ENCODE measurements at regions of chr19 and their contacts with region 1.

Region 1: GRCh38 chr19:53103198-53103944 is at the start of gene ZNF160:
- DNase-seq: peak; percentile 97 to 98 (median 97)
- H3K4me3 ChIP-seq: peak within 1 kb of the TSS; percentile 92 to 96
- H3K4me3 Mint-ChIP-seq: peak within 1 kb of the TSS; percentile 87 to 96 (median 95)
- H3K27ac ChIP-seq: peak within 1 kb of the TSS; percentile 84
- H3K27ac Mint-ChIP-seq: peak within 1 kb of the TSS; percentile 91 to 98 (median 95)
- H3K4me1 ChIP-seq: peaks cover 27% of the 10 kb centered on the region
- H3K4me1 Mint-ChIP-seq: peaks cover 20 to 46% (median 32%) of the 10 kb centered on the region in 4 donors
- H3K27me3 ChIP-seq: no peaks in the 10 kb centered on the region
- H3K27me3 Mint-ChIP-seq: no peaks in the 10 kb centered on the region
- total RNA-seq, gene ZNF160: 72.0 to 81.1 TPM

Region 2: GRCh38 chr19:52189735-52190486 is 913.5 kb before region 1 on chr19 and contains the start of gene PPP2R1A:
- CTCF ChIA-PET with region 1: no interaction called
- POLR2A ChIA-PET with region 1: no interaction called
- intact Hi-C with region 1: loop called (anchors 1 kb)
- DNase-seq: peak; percentile 97 to 100 (median 99)
- H3K4me3 ChIP-seq: peak within 1 kb of the TSS; percentile 75 to 87
- H3K4me3 Mint-ChIP-seq: peak within 1 kb of the TSS; percentile 94 to 99 (median 98)
- H3K27ac ChIP-seq: peak within 1 kb of the TSS; percentile 93
- H3K27ac Mint-ChIP-seq: peak within 1 kb of the TSS; percentile 92 to 100 (median 99)
- H3K4me1 ChIP-seq: peaks cover 53% of the 10 kb centered on the region
- H3K4me1 Mint-ChIP-seq: peaks cover 34 to 58% (median 43%) of the 10 kb centered on the region in 4 donors
- H3K27me3 ChIP-seq: no peaks in the 10 kb centered on the region
- H3K27me3 Mint-ChIP-seq: no peaks in the 10 kb centered on the region
- total RNA-seq, gene PPP2R1A: 166 to 175 TPM

Region 3: GRCh38 chr19:52853880-52854279 is 249.5 kb before region 1 on chr19:
- CTCF ChIA-PET with region 1: no interaction called
- POLR2A ChIA-PET with region 1: no interaction called
- intact Hi-C with region 1: loop called (anchors 5 kb)
- DNase-seq: no peak
- H3K4me3 ChIP-seq: no peak overlapping the region
- H3K4me3 Mint-ChIP-seq: peak overlapping the region in 2 of 8 donors; percentile 9 to 53
- H3K27ac ChIP-seq: no peak overlapping the region
- H3K27ac Mint-ChIP-seq: no peak overlapping the region
- H3K4me1 ChIP-seq: peaks cover 4% of the 10 kb centered on the region
- H3K4me1 Mint-ChIP-seq: peaks cover 12 to 42% (median 19%) of the 10 kb centered on the region in 4 donors
- H3K27me3 ChIP-seq: no peaks in the 10 kb centered on the region
- H3K27me3 Mint-ChIP-seq: no peaks in the 10 kb centered on the region

Region 4: DNA sequence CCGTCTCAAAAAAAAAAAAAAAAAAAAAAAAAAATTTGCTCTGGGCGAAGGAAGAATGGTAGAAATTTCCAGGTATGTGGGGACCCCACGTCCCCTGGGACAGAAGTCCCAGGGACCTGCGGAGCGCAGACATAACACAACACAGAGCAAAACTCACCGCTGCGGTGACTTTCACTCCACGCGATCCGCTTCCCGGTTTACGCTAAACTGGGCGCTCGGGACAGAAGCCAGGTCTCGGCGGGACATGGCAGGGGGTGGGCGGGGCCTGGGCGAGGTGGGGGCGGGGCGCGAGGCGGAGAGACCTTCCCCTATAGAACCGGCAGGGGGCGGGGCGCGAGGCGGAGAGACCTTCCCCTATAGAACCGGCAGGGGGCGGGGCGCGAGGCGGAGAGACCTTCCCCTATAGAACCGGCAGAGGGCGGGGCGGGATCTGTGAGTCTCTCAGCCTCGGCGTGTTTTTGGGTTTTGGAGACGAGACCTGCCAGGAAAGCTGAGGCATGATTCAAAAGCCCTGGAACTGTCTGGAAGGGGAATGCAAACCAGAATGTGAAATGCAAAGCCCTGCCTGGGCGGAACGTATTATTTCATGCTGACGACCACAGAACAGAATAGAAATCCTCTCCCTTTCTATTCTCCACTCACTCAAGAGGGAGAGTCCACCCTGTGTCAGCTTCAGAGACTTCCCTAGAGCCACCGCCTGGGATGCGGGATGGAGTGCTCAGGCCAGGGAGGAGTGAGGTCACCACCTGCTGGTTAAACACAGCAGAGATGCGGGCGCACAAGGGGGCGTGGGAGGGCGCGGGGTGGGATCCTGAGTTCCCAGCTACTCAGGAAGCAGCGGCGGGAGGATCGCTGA is 109.8 kb before region 1 on chr19:
- CTCF ChIA-PET with region 1: interaction called, 4 read pairs
- POLR2A ChIA-PET with region 1: no interaction called
- intact Hi-C with region 1: loop called (anchors 1 kb)
- DNase-seq: peak; percentile 77 to 90 (median 83)
- H3K4me3 ChIP-seq: peak overlapping the region; percentile 49 to 81
- H3K4me3 Mint-ChIP-seq: peak overlapping the region; percentile 69 to 96 (median 90)
- H3K27ac ChIP-seq: no peak overlapping the region
- H3K27ac Mint-ChIP-seq: peak overlapping the region in 6 of 7 donors; percentile 27 to 86 (median 68)
- H3K4me1 ChIP-seq: peaks cover 14% of the 10 kb centered on the region
- H3K4me1 Mint-ChIP-seq: peaks cover 3 to 23% (median 18%) of the 10 kb centered on the region in 4 donors
- H3K27me3 ChIP-seq: no peaks in the 10 kb centered on the region
- H3K27me3 Mint-ChIP-seq: peaks cover 5 to 9% of the 10 kb centered on the region in 2 donors

Region 5: GRCh38 chr19:53037101-53038097 is 66.0 kb before region 1 on chr19:
- CTCF ChIA-PET with region 1: no interaction called
- POLR2A ChIA-PET with region 1: no interaction called
- intact Hi-C with region 1: no loop called
- DNase-seq: peak in 1 of 5 donors; percentile 5
- H3K4me3 ChIP-seq: peak overlapping the region in 1 of 2 donors; percentile 8
- H3K4me3 Mint-ChIP-seq: peak overlapping the region in 5 of 8 donors; percentile 4 to 52 (median 33)
- H3K27ac ChIP-seq: no peak overlapping the region
- H3K27ac Mint-ChIP-seq: no peak overlapping the region
- H3K4me1 ChIP-seq: no peaks in the 10 kb centered on the region
- H3K4me1 Mint-ChIP-seq: peaks cover 0 to 3% (median 0%) of the 10 kb centered on the region in 4 donors
- H3K27me3 ChIP-seq: no peaks in the 10 kb centered on the region
- H3K27me3 Mint-ChIP-seq: peaks cover 0 to 9% of the 10 kb centered on the region in 2 donors

Region 6: DNA sequence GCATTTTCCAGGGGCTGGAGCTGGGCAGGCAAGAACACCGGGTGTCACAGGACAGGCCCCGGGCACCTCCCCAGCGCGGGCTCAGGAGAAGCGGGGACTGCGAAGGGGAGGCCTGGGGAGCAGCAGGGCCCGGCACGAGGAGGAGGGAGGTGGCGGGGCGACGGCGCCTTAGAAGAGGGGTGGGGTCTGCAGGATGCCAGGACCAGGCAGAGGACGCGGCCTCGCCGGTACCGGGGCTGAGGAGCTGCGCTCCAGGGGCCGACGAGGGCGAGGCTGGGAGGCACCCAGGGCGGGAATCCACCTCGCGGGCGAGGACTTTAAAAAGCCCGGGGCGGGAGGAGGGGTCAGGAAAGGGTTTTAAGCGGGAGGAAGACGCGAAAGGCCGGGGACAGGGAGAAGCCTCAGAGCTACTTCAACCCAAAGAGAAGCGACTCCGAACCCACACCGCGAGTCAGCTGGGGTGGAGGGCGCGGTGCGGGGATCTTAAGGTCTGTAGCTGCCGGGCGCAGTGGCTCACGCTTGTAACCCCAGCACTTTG is 54.8 kb after region 1 on chr19:
- CTCF ChIA-PET with region 1: no interaction called
- POLR2A ChIA-PET with region 1: interaction called, 8 read pairs
- intact Hi-C with region 1: loop called (anchors 1 kb)
- DNase-seq: peak in 3 of 5 donors; percentile 12 to 57 (median 21)
- H3K4me3 ChIP-seq: peak overlapping the region; percentile 29 to 58
- H3K4me3 Mint-ChIP-seq: peak overlapping the region; percentile 86 to 89 (median 88)
- H3K27ac ChIP-seq: peak overlapping the region; percentile 44
- H3K27ac Mint-ChIP-seq: peak overlapping the region in 6 of 7 donors; percentile 82 to 90 (median 88)
- H3K4me1 ChIP-seq: peaks cover 18% of the 10 kb centered on the region
- H3K4me1 Mint-ChIP-seq: peaks cover 11 to 30% (median 13%) of the 10 kb centered on the region in 4 donors
- H3K27me3 ChIP-seq: no peaks in the 10 kb centered on the region
- H3K27me3 Mint-ChIP-seq: peaks cover 0 to 6% of the 10 kb centered on the region in 2 donors

Region 7: GRCh38 chr19:53467485-53468262 is 364.3 kb after region 1 on chr19 and contains the start of gene ZNF813:
- CTCF ChIA-PET with region 1: no interaction called
- POLR2A ChIA-PET with region 1: no interaction called
- intact Hi-C with region 1: loop called (anchors 2 kb)
- DNase-seq: peak; percentile 88 to 96 (median 91)
- H3K4me3 ChIP-seq: peak within 1 kb of the TSS; percentile 57 to 62
- H3K4me3 Mint-ChIP-seq: peak within 1 kb of the TSS; percentile 89 to 96 (median 93)
- H3K27ac ChIP-seq: peak within 1 kb of the TSS; percentile 51
- H3K27ac Mint-ChIP-seq: peak within 1 kb of the TSS; percentile 83 to 94 (median 91)
- H3K4me1 ChIP-seq: peaks cover 13% of the 10 kb centered on the region
- H3K4me1 Mint-ChIP-seq: peaks cover 14 to 45% (median 25%) of the 10 kb centered on the region in 4 donors
- H3K27me3 ChIP-seq: no peaks in the 10 kb centered on the region
- H3K27me3 Mint-ChIP-seq: peaks cover 8 to 9% of the 10 kb centered on the region in 2 donors
- total RNA-seq, gene ZNF813: 9.4 to 10.1 TPM